ENCODE measurements at regions of chr12 and their contacts with region 1.

Region 1: GRCh38 chr12:47194501-47194900 is 114.7 kb upstream of the AMIGO2 start:
- DNase-seq: no peak
- H3K4me3 Mint-ChIP-seq: no peak overlapping the region
- H3K27ac Mint-ChIP-seq: peak overlapping the region; percentile 89
- H3K4me1 Mint-ChIP-seq: peaks cover 67% of the 10 kb centered on the region
- H3K27me3 Mint-ChIP-seq: no peaks in the 10 kb centered on the region

Region 2: DNA sequence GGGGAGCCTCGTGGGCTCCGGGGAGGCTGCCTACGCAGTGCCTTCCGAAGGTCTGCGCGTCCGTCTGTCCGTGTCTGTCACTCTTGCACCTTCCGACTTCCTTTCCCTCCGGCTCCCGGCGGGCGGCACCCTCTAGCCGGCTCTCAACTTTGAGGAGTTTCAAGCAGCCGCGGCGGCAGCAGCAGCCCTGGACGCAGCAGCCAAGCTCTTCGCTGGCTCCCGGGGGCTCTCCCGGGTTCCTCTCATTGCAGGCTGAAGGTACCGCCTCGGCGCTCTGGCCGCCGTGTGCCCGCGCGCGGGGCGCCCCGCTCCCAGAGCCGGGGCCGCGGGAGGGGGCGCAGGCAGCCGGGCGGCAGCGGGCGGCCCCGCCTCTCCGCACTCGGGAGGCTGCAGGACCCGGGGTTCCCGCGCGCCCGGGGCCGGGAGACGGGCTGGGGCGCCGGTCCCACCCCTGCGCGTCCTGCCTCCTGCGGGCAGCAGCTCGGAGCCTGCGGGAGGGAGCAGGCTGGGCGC is 115.0 kb before region 1 on chr12 and contains the starts of genes AMIGO2 and PCED1B:
- CTCF ChIA-PET with region 1: interaction called, 14 read pairs
- DNase-seq: peak; percentile 78
- H3K4me3 Mint-ChIP-seq: peak within 1 kb of the TSS; percentile 94
- H3K27ac Mint-ChIP-seq: peak within 1 kb of the TSS; percentile 87
- H3K4me1 Mint-ChIP-seq: peaks cover 71% of the 10 kb centered on the region
- H3K27me3 Mint-ChIP-seq: peaks cover 8% of the 10 kb centered on the region

Region 3: GRCh38 chr12:47095446-47096236 is 98.9 kb before region 1 on chr12:
- CTCF ChIA-PET with region 1: no interaction called
- DNase-seq: no peak
- H3K4me3 Mint-ChIP-seq: no peak overlapping the region
- H3K27ac Mint-ChIP-seq: no peak overlapping the region
- H3K4me1 Mint-ChIP-seq: peaks cover 13% of the 10 kb centered on the region
- H3K27me3 Mint-ChIP-seq: no peaks in the 10 kb centered on the region